ENCODE measurements at regions of chr10 and their contacts with region 1.

Region 1: GRCh38 chr10:29946953-29947700 is 112.3 kb downstream of the JCAD start:
- DNase-seq: peak; percentile 83 to 85
- ATAC-seq: peak; percentile 89
- H3K4me3 ChIP-seq: no peak overlapping the region
- H3K27ac ChIP-seq: peak overlapping the region; percentile 97 to 100
- H3K4me1 ChIP-seq: peaks cover 4 to 6% of the 10 kb centered on the region in 2 donors
- H3K27me3 ChIP-seq: no peaks in the 10 kb centered on the region

Region 2: GRCh38 chr10:29702273-29703164 is 244.6 kb before region 1 on chr10:
- intact Hi-C with region 1: no loop called
- DNase-seq: no peak
- ATAC-seq: no peak
- H3K4me3 ChIP-seq: no peak overlapping the region
- H3K27ac ChIP-seq: peak overlapping the region in 1 of 2 donors; percentile 8
- H3K4me1 ChIP-seq: peaks cover 0 to 6% of the 10 kb centered on the region in 2 donors
- H3K27me3 ChIP-seq: no peaks in the 10 kb centered on the region

Region 3: DNA sequence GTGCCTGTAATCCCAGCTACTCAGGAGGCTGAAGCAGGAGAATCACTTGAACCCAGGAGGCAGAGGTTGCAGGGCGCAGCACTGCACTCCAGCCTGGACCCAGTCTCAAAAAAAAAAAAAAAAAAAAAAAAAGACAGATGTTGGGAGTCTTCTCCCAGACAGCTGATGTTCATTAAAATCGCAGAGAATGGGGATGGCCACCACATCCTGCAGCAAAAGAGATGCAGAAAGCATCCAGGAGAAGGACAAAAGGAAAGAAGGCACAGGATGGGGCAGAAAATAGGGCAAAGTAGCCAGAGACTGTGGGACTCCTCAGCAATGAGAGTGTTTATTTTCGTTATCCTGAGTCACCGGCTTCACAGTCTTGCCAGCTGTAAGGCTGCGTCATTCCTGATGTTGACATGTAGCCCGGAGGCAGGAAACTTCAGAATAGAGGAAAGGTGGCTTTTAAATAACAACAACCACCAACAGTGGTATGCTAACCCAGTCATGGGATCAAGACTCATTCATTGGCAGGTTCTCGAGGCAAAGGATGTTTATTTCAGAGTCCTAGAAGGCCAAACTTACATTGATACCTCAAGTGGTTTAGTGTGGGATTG is 162.9 kb before region 1 on chr10:
- intact Hi-C with region 1: loop called in 1 of 2 experiments (anchors 10 kb)
- DNase-seq: peak in 1 of 2 donors; percentile 78
- ATAC-seq: peak; percentile 94
- H3K4me3 ChIP-seq: no peak overlapping the region
- H3K27ac ChIP-seq: peak overlapping the region in 1 of 2 donors; percentile 95
- H3K4me1 ChIP-seq: peaks cover 0 to 4% of the 10 kb centered on the region in 2 donors
- H3K27me3 ChIP-seq: no peaks in the 10 kb centered on the region

Region 4: DNA sequence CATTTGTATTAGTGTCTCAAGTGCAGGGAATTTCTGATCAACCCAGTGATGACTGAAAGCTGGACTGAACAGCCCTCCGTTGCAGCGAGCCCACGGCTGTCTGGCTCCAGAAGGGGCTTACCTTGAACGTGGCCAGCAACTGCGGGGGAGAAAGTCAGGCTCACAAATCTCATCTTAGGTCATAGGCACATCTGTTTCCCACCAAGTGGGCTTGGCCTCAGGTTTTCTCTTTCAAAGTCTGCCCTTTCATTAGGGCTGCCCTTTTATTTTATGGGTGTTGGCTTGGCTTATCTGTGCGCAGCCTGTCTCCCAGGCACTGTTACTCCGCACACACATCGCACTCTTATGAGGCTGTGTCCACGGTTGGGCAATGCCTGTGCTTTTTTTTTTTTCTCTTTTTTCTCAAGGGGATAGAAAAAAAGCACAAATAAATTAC is 65.8 kb before region 1 on chr10:
- intact Hi-C with region 1: loop called in 1 of 2 experiments (anchors 5 kb)
- DNase-seq: no peak
- ATAC-seq: peak; percentile 63
- H3K4me3 ChIP-seq: no peak overlapping the region
- H3K27ac ChIP-seq: peak overlapping the region; percentile 64 to 99
- H3K4me1 ChIP-seq: peaks cover 4 to 8% of the 10 kb centered on the region in 2 donors
- H3K27me3 ChIP-seq: no peaks in the 10 kb centered on the region

Region 5: GRCh38 chr10:29895456-29895855 is 51.7 kb before region 1 on chr10:
- intact Hi-C with region 1: loop called (anchors 5 kb)
- DNase-seq: peak; percentile 90 to 91
- ATAC-seq: peak; percentile 93
- H3K4me3 ChIP-seq: no peak overlapping the region
- H3K27ac ChIP-seq: peak overlapping the region; percentile 70 to 89
- H3K4me1 ChIP-seq: peaks cover 10 to 11% of the 10 kb centered on the region in 2 donors
- H3K27me3 ChIP-seq: no peaks in the 10 kb centered on the region

Measured in aorta (tissue), 5 donors.